HCT116 (cell line): ENCODE measurements at regions of chr10 and their contacts with region 1.

Region 1: DNA sequence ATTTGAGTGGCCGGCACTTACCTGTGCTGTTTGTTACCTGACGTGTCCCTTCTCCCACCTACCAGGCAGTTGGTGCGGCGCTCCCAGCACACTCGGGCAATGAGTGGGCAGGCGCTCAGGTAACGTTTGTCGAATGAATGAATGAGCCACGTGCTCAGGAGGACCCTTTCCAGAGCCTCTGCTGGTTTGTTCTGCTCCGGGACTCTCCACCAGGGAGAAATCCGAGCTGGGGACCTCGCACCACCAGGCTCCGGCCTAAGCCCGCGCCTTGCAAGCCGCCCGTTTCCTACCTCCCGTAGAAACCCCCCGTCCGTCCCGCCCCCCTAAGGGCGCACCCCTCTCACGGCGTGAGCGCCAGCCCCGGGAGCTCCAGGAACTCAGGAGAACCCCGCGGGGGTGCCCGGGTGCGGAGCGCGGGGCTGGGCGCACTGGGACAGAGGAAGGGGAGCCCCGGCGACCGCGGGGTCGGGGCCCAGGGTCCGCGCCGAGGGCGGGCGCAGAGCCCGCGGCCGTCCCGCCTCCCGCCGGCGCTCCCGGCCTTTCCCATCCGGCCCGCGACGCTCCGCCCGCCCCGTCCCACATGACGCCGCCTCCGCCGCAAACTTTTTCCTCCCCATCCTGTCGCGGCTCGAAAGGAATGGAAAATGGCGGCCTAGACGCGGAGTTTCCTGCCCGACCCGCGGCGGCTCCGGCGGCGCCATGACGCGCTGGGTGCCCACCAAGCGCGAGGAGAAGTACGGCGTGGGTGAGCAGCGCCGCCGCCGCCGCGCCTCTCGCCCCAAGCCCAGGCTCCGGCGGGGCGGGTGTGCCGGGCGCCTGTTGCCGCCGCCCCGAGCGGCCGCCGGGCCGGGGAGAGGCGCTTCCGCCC is at the start of gene DOCK1:
- DNase-seq: peak; percentile 38
- ATAC-seq: peak; percentile 86
- H3K4me3 ChIP-seq: peak within 1 kb of the TSS; percentile 69 to 80
- H3K27ac ChIP-seq: peak within 1 kb of the TSS; percentile 80
- H3K4me1 ChIP-seq: peaks cover 24 to 44% of the 10 kb centered on the region in 2 experiments
- H3K27me3 ChIP-seq: no peaks in the 10 kb centered on the region
- CTCF ChIP-seq: no peak
- POLR2A ChIP-seq: peak; percentile 71
- RAD21 ChIP-seq: no peak
- total RNA-seq, gene DOCK1: 46.5 TPM

Region 2: DNA sequence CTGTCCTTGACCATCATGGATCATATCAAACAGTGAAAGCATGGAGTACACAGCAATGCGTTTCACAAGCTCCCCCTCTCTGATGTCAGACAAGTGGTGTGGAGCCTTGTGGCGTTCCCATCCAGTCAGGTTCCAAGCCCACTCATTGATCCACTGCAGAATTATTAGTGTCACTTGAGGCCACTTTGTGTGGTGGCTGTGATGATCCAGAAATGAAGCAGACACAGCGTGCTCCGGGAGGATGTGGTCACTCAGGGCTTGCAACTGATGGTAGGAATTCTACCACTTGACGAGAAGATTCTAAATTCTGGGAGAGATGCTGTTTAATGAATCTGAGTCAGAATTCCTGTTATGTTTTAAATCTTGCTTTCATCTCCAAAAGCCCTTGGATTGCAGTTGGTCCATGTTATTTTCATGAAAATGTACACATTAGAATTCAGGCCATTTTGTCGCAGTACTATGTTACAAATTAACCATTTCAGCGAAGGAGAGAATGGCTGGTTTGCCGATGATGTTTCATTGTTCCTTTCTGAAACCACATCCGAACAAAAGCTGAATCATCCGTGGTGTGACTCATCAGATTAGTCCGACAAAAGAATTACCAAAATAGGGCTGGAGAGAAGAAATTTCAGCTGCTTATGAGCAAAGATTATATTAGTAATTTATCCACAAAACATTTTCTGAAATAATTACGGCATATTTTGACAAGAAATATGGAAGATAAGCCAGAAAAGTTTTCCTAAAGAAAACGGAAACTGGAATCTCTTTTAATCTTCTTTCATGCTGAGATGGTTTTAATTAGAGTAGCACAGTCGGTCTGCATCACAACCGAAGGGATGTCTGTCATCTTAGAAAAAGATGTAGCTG is 243.2 kb after region 1 on chr10:
- CTCF ChIA-PET with region 1: no interaction called
- POLR2A ChIA-PET with region 1: no interaction called
- RAD21 ChIA-PET with region 1: no interaction called
- intact Hi-C with region 1: loop called (anchors 10 kb)
- DNase-seq: peak; percentile 80
- ATAC-seq: peak; percentile 69
- H3K4me3 ChIP-seq: peak overlapping the region in 1 of 2 experiments; percentile 29; a peak in 2 of 4 replicates
- H3K27ac ChIP-seq: peak overlapping the region; percentile 51
- H3K4me1 ChIP-seq: peaks cover 32 to 66% of the 10 kb centered on the region in 2 experiments
- H3K27me3 ChIP-seq: no peaks in the 10 kb centered on the region
- CTCF ChIP-seq: no peak
- POLR2A ChIP-seq: no peak
- RAD21 ChIP-seq: peak; percentile 13; the same call in 1 of the 2 replicates